ENCODE measurements at regions of chr7 and their contacts with region 1.

Region 1: GRCh38 chr7:157432957-157433576 is 96.3 kb downstream of the DNAJB6 start:
- DNase-seq: peak in 38 of 42 donors; percentile 31 to 83 (median 64)

Region 2: DNA sequence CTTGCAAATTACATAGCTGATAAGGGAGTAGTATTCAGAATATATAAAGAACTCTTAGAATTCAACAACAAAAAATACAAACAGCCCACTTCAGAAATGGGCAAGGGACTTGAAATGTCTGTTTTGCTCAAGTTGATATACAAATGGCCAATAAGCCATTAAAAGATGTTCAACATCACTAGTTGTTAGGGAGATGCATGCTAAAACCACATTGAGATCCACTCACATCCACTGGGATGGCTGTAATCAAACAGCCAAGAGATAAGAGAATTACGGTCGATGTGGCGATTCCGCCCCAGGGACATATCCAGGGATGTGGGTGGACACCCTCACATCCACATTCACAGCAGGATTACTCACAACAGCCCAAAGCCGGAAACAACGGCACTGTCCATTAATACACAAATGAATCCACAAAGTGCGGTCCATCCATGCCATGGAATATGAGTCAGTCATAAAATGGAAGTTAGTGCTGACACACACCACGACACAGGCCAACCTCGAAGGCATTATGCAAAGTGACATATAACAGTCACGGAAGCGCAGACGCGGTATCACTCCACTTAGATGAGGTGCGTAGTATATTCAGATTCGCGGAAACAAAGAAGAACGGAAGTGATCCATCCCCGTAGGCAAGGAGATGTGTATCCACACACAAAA is 131.6 kb after region 1 on chr7:
- intact Hi-C with region 1: no loop called
- DNase-seq: no peak

Region 3: DNA sequence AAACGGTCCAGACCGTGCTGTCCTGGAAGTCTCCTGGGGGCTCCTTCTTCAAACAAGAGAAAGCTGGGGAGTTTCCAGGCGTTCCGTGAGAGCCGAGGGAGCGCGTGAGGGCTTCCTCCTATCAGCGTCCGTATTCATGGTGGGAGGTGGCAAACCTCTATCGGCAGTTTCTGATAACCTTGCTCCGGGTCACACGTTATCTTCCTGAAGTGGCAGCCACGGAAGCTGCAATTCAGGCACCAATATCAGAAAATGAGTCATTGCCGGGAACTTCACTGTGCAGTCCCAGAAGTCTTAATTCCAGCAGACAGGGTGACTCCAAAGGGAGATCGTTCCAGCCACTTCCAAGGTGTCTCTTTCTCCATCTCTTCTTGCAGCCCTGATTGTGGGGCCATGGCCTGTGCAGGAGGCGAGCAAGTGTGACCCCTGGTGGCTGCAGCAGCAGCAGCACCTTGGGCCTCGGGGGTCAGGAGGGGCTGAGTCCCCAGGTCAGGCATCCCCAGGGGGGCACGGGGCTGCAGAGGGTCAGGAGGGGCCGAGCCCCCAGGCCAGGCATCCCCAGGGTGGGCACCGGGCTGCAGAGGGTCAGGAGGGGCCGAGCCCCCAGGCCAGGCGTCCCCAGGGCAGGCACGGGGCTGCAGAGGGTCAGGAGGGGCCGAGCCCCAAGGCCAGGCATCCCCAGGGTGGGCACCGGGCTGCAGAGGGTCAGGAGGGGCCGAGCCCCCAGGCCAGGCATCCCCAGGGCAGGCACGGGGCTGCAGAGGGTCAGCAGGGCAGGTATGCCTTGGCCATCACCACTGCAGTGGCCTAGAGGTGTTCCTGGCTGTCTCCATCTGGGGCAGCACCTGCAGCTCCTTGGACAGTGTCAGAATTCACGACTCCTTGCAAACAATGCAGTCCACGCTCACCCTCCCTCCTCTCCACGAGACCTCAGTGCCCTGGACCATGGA is 442.4 kb after region 1 on chr7:
- intact Hi-C with region 1: loop called (anchors 10 kb)
- DNase-seq: peak in 31 of 42 donors; percentile 24 to 74 (median 44)

Measured in head of caudate nucleus (tissue), 42 donors.